ENCODE measurements at regions of chr15 and their contacts with region 1.

Region 1: GRCh38 chr15:85689729-85690128 is 105.0 kb downstream of the KLHL25 start:
- DNase-seq: peak; percentile 89
- H3K4me3 ChIP-seq: peak overlapping the region; percentile 70
- H3K27ac ChIP-seq: peak overlapping the region; percentile 93
- H3K4me1 ChIP-seq: peaks cover 82% of the 10 kb centered on the region
- CTCF ChIP-seq: no peak

Region 2: GRCh38 chr15:85592148-85592547 is 97.6 kb before region 1 on chr15:
- CTCF ChIA-PET with region 1: no interaction called
- POLR2A ChIA-PET with region 1: no interaction called
- intact Hi-C with region 1: no loop called
- DNase-seq: no peak
- H3K4me3 ChIP-seq: no peak overlapping the region
- H3K27ac ChIP-seq: no peak overlapping the region
- H3K4me1 ChIP-seq: no peaks in the 10 kb centered on the region
- CTCF ChIP-seq: peak; percentile 38; the same call in 1 of the 2 replicates

Region 3: DNA sequence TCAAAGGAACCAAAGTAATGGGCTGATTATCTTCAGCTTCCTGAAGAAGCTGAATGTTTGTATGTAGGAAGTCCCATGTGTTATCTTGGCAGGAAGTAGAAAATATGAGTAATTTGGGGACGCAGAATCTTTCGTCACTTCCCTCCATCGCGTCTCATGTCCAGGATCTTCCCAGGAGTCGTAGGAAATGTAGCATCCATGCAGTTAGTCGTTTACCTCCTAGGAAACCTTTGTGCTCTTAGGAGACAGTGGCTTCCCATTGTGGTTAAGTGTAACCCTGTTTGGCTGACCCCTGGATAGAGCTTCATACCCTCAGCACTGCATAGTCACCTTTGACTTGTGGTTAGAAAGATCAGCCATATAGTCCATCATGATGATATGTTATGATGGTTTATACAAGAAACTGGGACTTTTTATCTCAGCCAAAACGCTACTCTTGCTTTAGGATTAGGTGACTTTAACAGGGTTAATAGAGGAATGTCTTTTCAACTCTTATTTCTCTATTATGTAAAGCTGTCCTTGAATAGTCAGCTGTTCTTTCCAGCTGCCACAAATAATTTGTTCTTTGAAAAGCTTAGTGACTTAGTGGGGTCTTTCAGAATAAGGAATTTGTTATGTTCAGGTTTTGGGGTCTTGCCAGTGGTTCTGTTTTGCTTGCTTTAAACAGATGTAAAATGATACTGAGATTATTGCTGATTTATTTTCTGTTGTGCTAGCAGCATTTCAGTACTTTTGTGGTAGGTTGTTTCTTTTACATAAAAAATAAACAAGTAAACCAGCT is 12.8 kb after region 1 on chr15:
- CTCF ChIA-PET with region 1: interaction called, 8 read pairs
- POLR2A ChIA-PET with region 1: interaction called, 73 read pairs
- intact Hi-C with region 1: loop called (anchors 2 kb)
- DNase-seq: no peak
- H3K4me3 ChIP-seq: peak overlapping the region; percentile 52
- H3K27ac ChIP-seq: peak overlapping the region; percentile 81
- H3K4me1 ChIP-seq: peaks cover 80% of the 10 kb centered on the region
- CTCF ChIP-seq: no peak

Region 4: GRCh38 chr15:85707519-85708338 is 18.0 kb after region 1 on chr15:
- CTCF ChIA-PET with region 1: interaction called, 8 read pairs
- POLR2A ChIA-PET with region 1: interaction called, 73 read pairs
- intact Hi-C with region 1: loop called (anchors 2 kb)
- DNase-seq: peak; percentile 63
- H3K4me3 ChIP-seq: peak overlapping the region; percentile 63
- H3K27ac ChIP-seq: peak overlapping the region; percentile 90
- H3K4me1 ChIP-seq: peaks cover 59% of the 10 kb centered on the region
- CTCF ChIP-seq: no peak

Region 5: GRCh38 chr15:85718271-85718971 is 28.7 kb after region 1 on chr15:
- CTCF ChIA-PET with region 1: no interaction called
- POLR2A ChIA-PET with region 1: interaction called, 6 read pairs
- intact Hi-C with region 1: loop called (anchors 2 kb)
- DNase-seq: peak; percentile 86
- H3K4me3 ChIP-seq: peak overlapping the region; percentile 13
- H3K27ac ChIP-seq: peak overlapping the region; percentile 78
- H3K4me1 ChIP-seq: peaks cover 39% of the 10 kb centered on the region
- CTCF ChIP-seq: no peak